Posterior cingulate gyrus (tissue), 11 donors: ENCODE measurements at regions of chr13 and their contacts with region 1.

Region 1: DNA sequence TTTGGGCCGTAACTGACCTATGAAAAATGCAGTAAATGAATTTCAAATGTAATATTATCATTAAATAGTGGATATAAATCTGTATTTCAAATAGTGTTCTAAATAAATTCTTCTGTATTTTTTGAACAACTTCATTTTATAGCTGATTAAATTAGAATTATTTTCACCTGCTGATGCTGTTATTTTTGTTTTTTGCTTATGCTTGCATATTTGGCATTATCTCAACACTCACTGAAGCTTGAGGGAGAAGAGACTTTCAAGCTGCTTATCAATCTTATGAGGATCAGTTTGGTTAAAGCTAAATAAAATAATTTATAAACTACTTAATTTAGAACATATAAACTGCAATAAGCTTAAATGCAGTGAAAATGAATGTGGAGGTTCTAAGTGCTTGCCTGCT is 251.3 kb upstream of the PCDH9 start:
- DNase-seq: no peak

Region 2: DNA sequence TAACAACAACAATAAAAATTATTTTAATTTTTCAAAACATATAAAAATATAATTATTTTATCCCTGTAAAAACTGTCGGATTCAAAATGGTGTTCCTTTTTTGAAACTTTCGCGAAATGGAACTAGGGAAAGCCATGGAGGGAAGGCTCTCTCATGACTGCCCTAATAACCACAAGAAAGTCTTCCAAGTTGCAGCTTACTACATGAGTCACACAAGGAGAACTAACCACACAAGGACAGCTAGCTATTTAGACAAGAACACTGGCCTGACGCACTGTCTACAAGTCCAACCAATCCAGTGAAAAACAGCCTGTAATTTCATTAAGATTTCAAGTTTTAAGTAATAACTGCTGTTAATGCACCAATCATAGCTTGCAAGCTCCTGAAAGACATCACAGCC is 67.9 kb after region 1 on chr13:
- intact Hi-C with region 1: loop called (anchors 2 kb)
- DNase-seq: no peak